Activated B cell treated with CpG ODN at 0.5 μM for 24 hours (primary cell): ENCODE measurements at regions of chr16 and their contacts with region 1.

Region 1: DNA sequence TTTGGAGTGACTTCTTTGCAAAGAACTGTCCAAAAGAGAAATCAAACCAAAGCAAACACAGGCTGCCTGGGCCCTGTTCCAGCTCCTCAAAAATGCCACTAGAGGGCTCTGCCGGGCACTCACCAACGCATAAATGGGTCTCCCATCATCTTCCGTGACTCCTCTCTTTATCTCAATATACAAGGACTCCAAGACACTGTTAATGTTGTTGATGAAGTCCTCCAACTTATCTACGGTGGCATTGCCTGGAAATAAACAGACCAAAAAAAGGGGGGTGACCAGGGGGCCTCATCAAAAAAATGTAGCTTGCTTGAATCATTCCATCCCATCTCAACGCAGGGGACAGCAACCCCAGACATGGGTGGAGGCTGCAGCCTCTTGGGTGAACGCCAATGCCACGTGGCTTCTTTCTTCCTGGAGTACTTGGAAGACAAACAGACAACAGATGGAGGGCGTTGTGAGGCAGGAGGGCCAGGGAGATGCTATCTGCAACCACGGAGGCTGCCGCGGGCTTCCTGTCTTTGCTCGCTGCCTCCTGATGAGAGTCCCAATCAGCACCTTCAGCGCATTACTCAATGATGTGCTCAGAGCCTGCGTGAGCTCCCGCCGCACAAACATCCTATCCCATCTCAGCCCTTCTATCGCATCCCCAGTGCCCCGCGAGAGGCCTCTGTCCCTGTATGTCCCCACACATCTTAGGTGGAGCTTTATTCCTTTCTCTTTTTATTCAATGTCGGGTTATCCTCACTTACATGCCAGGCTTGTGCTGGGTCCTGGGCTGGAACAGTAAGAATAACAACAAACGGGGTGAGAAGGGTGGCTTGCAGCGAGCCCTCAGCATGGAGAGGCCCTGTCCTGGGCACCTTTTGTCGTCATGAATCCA is 32.0 kb downstream of the KDM8 start:
- DNase-seq: no peak
- ATAC-seq: peak; percentile 10
- H3K4me3 Mint-ChIP-seq: peak overlapping the region; percentile 73
- H3K27ac Mint-ChIP-seq: peak overlapping the region; percentile 88
- H3K4me1 Mint-ChIP-seq: peaks cover 92% of the 10 kb centered on the region
- H3K27me3 Mint-ChIP-seq: no peaks in the 10 kb centered on the region
- CTCF ChIP-seq: peak; percentile 44

Region 2: DNA sequence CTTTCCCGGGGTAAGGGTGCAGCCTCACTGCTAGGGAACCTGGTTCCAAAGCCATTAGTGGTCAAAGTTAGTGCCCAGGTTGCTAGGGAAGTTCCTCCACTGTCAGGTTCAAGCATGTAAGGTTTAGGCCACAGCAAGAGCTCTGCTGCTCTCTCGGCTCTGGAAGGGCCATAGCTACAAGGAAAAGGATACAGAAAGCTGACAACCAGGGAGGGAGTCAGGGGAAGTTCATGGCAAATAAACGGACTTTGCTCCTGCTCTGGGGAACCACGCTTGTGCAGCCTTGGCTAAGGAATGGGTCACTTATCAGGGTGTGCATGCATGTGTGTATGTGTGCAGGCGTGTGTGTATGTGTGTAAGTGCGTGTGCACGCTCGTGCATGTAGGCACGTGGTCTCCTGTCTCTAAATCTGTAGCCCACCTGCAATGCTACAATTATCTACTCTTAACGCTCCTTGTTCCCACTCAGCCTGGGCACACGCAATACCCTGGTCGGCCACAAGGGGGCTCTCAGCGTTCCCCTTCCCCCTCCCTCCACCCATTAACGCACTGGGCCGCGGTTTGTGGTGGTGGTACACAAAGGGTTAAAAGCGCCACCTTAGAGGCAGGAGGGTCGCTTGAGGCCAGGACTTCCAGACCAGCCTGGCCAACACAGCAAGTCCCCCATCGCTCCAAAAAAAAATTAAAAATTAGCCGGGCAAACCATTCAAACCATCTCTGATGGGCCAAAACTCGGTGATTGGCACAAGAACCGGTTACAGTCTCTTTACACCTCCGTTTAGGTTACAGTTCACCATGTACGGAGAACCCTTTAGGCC is 80.4 kb before region 1 on chr16:
- CTCF ChIA-PET with region 1: no interaction called
- POLR2A ChIA-PET with region 1: no interaction called
- intact Hi-C with region 1: loop called (anchors 1 kb)
- DNase-seq: peak; percentile 64
- ATAC-seq: peak; percentile 93
- H3K4me3 Mint-ChIP-seq: no peak overlapping the region
- H3K27ac Mint-ChIP-seq: peak overlapping the region; percentile 59
- H3K4me1 Mint-ChIP-seq: peaks cover 11% of the 10 kb centered on the region
- H3K27me3 Mint-ChIP-seq: no peaks in the 10 kb centered on the region
- CTCF ChIP-seq: peak; percentile 94

Region 3: DNA sequence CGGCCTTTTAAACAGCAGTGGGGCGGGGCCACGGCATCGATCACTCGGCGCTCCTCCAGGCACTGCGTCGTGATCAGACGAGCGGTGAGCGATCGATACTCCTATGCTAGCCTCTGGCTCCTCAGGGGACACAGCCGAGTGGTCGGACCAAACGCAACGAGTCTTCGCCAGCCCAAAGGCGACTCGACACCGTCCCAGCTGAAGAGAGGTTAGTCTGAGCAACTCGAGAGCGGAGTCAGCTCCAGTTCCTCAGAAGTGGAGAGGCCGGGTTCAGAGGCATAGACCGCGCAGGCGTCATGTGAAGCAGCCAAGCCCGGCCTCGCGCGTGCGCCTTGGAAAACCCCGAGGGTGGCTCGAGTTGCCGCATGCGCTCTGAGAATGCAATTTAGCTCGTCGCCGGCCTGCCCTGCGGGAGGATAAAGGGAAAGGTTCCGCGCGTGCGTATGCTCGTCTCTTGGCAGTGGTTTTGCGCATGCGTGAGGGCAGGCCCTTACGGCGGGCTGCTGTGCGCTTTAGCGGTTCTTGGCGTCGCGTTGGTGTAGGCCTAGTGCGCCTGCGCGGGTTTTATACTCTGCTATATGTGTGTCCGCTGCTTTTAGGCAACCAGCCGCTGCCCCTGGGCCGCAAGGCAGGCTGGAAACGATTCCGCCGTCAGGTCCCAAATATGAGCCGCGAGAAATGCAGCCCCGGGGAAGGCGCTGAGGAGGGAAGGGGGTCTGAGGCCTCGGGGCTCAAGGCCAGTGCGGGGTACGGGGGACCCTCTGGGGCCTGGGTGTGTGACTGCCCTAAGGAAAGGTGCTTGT is 31.7 kb before region 1 on chr16 and contains the start of gene KDM8:
- CTCF ChIA-PET with region 1: interaction called, 4 read pairs
- POLR2A ChIA-PET with region 1: interaction called, 18 read pairs
- intact Hi-C with region 1: loop called (anchors 1 kb)
- DNase-seq: peak; percentile 97
- ATAC-seq: peak; percentile 87
- H3K4me3 Mint-ChIP-seq: peak within 1 kb of the TSS; percentile 99
- H3K27ac Mint-ChIP-seq: peak within 1 kb of the TSS; percentile 100
- H3K4me1 Mint-ChIP-seq: peaks cover 66% of the 10 kb centered on the region
- H3K27me3 Mint-ChIP-seq: no peaks in the 10 kb centered on the region
- CTCF ChIP-seq: no peak
- total RNA-seq, gene KDM8: 13.4 and 17.9 TPM in 2 replicates

Region 4: DNA sequence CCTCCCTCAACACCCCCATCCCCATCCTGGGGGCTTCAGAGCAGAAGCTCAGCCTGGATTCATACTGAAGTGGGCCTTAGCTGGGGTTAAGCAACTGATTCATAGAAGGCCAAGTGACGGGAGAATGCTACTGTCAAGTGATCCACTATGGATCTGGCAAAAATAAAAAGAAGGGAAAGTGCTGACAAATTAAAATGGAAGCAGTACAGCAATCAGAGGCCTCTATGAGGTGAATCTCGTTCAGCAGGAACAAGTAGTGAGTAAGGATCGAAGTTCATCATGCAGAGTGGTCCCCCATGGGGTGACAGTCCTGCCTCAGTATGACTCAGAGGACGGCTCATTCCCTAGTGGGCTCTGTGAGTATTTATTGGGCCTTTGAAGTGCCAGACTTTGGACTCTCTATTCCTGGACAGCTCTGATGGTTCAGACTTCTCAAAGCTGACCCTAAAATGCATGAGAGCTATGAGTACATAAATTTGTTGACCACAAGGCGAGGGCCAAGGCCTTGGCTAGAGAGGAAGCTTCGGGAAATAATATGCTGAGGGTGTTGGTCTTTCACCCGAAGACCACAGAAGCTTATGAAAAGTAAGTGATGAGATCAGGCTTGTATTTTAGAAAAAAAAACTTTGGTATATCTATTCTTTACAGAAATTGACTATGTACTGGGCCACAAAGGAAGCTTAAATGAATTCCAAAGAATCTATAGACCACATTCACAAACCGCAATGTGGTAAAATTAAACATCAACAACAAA is 38.6 kb after region 1 on chr16:
- CTCF ChIA-PET with region 1: interaction called, 7 read pairs
- POLR2A ChIA-PET with region 1: interaction called, 21 read pairs
- intact Hi-C with region 1: no loop called
- DNase-seq: no peak
- ATAC-seq: peak; percentile 86
- H3K4me3 Mint-ChIP-seq: peak overlapping the region; percentile 25
- H3K27ac Mint-ChIP-seq: peak overlapping the region; percentile 93
- H3K4me1 Mint-ChIP-seq: peaks cover 62% of the 10 kb centered on the region
- H3K27me3 Mint-ChIP-seq: no peaks in the 10 kb centered on the region
- CTCF ChIP-seq: no peak

Region 5: DNA sequence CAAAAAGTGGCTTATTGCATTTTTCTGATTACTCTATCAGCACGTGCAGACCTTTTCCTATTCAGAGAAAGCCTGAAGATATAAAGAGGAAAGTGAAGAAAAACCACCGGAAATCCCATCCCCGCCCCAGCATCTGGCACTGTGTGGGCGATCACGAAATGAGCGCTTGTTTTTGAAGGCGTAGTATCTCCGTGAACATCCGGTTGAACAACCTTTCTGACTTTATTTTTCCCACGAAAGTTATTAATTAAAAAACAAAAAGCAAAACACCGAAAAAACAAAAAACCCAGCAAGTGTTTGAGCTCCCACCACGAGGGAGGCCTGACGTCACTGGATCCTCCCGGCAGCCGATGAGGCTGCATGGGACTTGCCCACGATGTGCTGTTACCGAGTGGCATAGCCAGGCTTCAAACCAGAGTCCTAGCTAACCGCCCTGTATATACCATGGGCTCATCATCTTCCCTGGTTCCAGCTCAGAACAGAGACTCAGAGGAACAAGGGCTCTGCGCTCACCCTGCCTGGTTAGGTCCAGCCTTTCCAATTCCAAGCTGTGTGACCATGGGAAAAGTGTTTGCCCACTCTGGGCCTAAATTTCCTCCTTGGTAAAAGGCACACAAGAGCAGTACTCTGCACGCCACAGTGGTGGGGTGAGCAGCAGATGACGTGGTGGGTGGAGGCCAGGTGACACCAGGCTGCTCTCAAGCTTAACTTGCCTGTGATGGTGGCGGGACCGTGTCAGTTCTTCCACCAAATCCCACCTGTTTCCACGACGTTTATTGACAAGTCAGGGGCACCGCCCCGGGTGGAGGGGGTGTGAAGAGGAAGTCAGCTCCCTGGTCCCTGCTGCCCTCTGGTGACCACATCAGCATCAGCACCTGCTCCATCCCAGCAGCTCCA is 132.4 kb after region 1 on chr16:
- CTCF ChIA-PET with region 1: interaction called, 98 read pairs
- POLR2A ChIA-PET with region 1: interaction called, 96 read pairs
- intact Hi-C with region 1: loop called (anchors 1 kb)
- DNase-seq: peak; percentile 76
- ATAC-seq: peak; percentile 78
- H3K4me3 Mint-ChIP-seq: peak overlapping the region; percentile 70
- H3K27ac Mint-ChIP-seq: peak overlapping the region; percentile 96
- H3K4me1 Mint-ChIP-seq: peaks cover 71% of the 10 kb centered on the region
- H3K27me3 Mint-ChIP-seq: no peaks in the 10 kb centered on the region
- CTCF ChIP-seq: no peak

Region 6: GRCh38 chr16:27449434-27450195 is 214.3 kb after region 1 on chr16:
- CTCF ChIA-PET with region 1: interaction called, 12 read pairs
- POLR2A ChIA-PET with region 1: interaction called, 49 read pairs
- intact Hi-C with region 1: loop called (anchors 1 kb)
- DNase-seq: peak; percentile 78
- ATAC-seq: peak; percentile 78
- H3K4me3 Mint-ChIP-seq: peak overlapping the region; percentile 85
- H3K27ac Mint-ChIP-seq: peak overlapping the region; percentile 99
- H3K4me1 Mint-ChIP-seq: peaks cover 97% of the 10 kb centered on the region
- H3K27me3 Mint-ChIP-seq: no peaks in the 10 kb centered on the region
- CTCF ChIP-seq: no peak